ENCODE measurements at regions of chr2 and their contacts with region 1.

Region 1: DNA sequence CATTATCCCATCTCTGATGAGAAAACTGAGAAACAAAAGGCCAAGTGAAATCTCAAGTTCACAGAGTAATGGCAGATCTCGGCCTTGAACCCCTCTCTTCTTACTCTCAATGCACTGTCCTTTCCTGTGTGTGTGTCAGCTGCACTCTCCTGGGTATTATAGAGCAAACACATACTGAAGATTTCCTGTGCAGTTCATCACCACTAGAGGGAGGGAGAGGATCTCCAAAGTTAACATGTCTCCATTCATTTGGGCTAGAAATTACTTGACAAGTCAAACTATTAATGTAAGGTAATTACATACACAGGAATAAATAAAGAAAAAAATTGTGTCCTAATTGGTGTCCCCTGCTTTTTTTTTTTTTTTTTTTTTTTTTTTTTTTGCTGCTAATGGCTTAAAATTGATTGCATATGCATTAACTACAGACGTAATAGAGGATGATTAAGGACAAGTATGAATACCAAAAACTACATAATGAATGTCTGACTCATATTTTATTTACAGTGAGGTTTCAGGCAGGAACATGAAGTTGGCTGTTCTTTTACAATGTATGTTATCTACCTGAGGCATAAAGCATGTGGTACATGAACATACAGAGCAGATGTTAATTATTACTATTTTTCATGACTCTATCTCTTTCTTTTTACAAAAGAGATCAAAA is 269.2 kb downstream of the NYAP2 start:
- H3K4me3 ChIP-seq: no peak overlapping the region
- H3K27ac ChIP-seq: no peak overlapping the region
- H3K4me1 ChIP-seq: no peaks in the 10 kb centered on the region
- CTCF ChIP-seq: no peak

Region 2: DNA sequence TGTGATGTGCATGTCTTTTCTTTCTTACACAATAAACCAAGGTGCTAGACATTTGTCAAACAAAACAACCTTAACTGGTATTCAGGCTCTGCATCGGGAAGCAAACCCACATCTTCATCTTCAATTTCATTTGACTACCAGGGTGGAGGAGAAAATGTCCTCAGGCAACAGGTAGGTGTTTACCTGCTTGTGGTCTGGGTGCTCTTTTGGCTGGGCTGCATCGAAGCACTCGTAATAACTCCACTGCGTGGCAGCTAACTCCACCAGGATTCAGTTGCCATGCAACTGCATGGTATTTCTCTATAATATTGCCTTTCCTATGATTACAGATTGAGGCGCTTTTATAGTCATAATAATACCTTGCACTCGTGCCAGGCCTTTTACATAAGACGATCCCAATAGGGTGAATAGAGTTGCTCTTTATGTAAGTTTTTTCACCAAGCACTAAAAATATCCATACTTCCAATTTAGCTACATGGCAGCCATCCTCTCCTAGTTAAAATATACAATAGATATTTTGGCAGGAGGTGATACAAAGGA is 288.9 kb before region 1 on chr2:
- CTCF ChIA-PET with region 1: no interaction called
- POLR2A ChIA-PET with region 1: no interaction called
- H3K4me3 ChIP-seq: no peak overlapping the region
- H3K27ac ChIP-seq: no peak overlapping the region
- H3K4me1 ChIP-seq: no peaks in the 10 kb centered on the region
- CTCF ChIP-seq: no peak

Region 3: DNA sequence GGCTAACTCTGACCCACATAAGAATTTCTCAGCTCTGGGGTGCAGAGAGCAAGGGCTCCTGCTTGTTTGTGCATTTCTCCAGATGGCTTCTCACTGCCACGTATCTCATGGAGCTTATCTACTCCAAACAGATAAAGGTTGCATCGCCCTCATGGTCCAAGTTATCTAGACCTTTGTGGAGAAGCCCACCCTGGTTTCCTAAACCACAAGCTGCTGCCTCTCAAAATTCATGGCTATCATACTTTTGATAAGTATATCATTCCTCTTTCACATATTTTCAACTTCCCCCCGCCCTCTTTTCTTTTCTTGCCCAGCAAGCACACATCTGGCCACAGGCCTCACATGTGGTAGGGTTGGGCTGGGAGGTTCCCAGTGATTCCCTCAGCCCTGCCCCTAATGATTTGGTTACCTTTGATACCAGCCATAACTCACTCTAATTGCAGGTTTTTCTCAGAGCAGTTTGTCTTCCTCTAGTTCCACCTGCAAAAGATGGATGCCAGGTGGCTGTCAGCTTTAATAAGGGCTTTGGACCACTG is 1313.1 kb after region 1 on chr2:
- CTCF ChIA-PET with region 1: interaction called, 11 read pairs
- POLR2A ChIA-PET with region 1: no interaction called
- H3K4me3 ChIP-seq: no peak overlapping the region
- H3K27ac ChIP-seq: no peak overlapping the region
- H3K4me1 ChIP-seq: no peaks in the 10 kb centered on the region
- CTCF ChIP-seq: no peak